CD4-positive, alpha-beta memory T cell (primary cell): ENCODE measurements at regions of chr11 and their contacts with region 1.

Region 1: DNA sequence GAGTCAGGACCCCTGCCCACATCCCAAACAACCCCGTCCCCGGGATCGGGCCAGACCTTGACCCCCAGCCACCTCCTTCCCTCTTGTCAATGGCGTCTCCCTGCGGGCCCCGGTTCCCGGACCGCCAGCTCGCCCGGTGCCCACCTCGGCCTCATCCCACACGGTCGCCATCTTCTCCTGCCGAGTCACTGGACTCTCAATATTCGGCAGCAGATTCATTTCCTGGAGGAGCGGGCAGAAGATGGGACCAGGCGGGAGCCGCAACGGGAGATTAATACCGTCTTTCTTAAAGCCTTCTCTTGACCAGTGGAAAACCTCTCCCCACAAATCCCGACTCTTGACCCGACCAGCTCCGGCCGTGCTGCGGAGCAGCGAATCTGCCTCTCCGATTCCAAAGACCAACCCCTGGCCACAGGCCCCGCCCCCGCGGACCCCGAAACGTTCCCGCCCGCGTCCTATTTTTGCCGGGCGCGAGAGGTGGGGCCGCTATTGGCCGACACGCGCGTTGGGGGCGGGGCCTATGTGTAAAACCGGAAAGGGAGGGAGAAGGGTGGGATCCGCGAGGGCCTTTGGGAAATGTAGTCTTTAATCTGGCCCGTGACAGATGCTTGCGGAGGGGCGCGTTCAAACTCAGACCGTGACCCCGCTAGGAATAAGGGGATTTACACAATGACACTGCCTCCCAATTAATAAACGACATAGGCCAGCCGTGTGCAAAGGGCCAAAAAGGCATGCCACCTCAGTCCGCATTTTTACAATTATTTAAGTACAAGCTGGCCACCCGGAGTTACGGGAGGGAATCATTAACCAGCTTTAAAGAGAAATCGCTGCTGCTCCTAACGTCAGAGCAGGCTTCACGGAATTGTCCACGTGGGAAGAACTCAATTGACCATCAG is at the start of gene PSMC3:
- DNase-seq: peak; percentile 94 to 97 (median 96)
- H3K4me3 ChIP-seq: peak within 1 kb of the TSS; percentile 64 to 91
- H3K4me3 Mint-ChIP-seq: peak within 1 kb of the TSS; percentile 99 to 100 (median 100)
- H3K27ac ChIP-seq: peak within 1 kb of the TSS; percentile 85
- H3K27ac Mint-ChIP-seq: peak within 1 kb of the TSS; percentile 92 to 99 (median 99)
- H3K4me1 ChIP-seq: peaks cover 18% of the 10 kb centered on the region
- H3K4me1 Mint-ChIP-seq: peaks cover 12 to 32% (median 22%) of the 10 kb centered on the region in 4 donors
- H3K27me3 ChIP-seq: no peaks in the 10 kb centered on the region
- H3K27me3 Mint-ChIP-seq: no peaks in the 10 kb centered on the region
- total RNA-seq, gene PSMC3: 53.9 to 59.6 TPM

Region 2: GRCh38 chr11:47366020-47366490 is 60.3 kb before region 1 on chr11:
- CTCF ChIA-PET with region 1: no interaction called
- POLR2A ChIA-PET with region 1: no interaction called
- intact Hi-C with region 1: no loop called
- DNase-seq: no peak
- H3K4me3 ChIP-seq: no peak overlapping the region
- H3K4me3 Mint-ChIP-seq: no peak overlapping the region
- H3K27ac ChIP-seq: no peak overlapping the region
- H3K27ac Mint-ChIP-seq: peak overlapping the region in 1 of 7 donors; percentile 9
- H3K4me1 ChIP-seq: no peaks in the 10 kb centered on the region
- H3K4me1 Mint-ChIP-seq: peaks cover 0 to 6% (median 3%) of the 10 kb centered on the region in 4 donors
- H3K27me3 ChIP-seq: no peaks in the 10 kb centered on the region
- H3K27me3 Mint-ChIP-seq: peaks cover 0 to 5% of the 10 kb centered on the region in 2 donors

Region 3: GRCh38 chr11:47399860-47400767 is 26.2 kb before region 1 on chr11:
- CTCF ChIA-PET with region 1: no interaction called
- POLR2A ChIA-PET with region 1: interaction called, 12 read pairs
- intact Hi-C with region 1: no loop called
- DNase-seq: peak in 4 of 5 donors; percentile 21 to 38 (median 26)
- H3K4me3 ChIP-seq: peak overlapping the region in 1 of 2 donors; percentile 61
- H3K4me3 Mint-ChIP-seq: peak overlapping the region; percentile 80 to 95 (median 84)
- H3K27ac ChIP-seq: peak overlapping the region; percentile 62
- H3K27ac Mint-ChIP-seq: peak overlapping the region; percentile 85 to 94 (median 88)
- H3K4me1 ChIP-seq: peaks cover 31% of the 10 kb centered on the region
- H3K4me1 Mint-ChIP-seq: peaks cover 12 to 40% (median 27%) of the 10 kb centered on the region in 4 donors
- H3K27me3 ChIP-seq: no peaks in the 10 kb centered on the region
- H3K27me3 Mint-ChIP-seq: no peaks in the 10 kb centered on the region